Caco-2 (cell line): ENCODE measurements at regions of chr9 and their contacts with region 1.

Region 1: DNA sequence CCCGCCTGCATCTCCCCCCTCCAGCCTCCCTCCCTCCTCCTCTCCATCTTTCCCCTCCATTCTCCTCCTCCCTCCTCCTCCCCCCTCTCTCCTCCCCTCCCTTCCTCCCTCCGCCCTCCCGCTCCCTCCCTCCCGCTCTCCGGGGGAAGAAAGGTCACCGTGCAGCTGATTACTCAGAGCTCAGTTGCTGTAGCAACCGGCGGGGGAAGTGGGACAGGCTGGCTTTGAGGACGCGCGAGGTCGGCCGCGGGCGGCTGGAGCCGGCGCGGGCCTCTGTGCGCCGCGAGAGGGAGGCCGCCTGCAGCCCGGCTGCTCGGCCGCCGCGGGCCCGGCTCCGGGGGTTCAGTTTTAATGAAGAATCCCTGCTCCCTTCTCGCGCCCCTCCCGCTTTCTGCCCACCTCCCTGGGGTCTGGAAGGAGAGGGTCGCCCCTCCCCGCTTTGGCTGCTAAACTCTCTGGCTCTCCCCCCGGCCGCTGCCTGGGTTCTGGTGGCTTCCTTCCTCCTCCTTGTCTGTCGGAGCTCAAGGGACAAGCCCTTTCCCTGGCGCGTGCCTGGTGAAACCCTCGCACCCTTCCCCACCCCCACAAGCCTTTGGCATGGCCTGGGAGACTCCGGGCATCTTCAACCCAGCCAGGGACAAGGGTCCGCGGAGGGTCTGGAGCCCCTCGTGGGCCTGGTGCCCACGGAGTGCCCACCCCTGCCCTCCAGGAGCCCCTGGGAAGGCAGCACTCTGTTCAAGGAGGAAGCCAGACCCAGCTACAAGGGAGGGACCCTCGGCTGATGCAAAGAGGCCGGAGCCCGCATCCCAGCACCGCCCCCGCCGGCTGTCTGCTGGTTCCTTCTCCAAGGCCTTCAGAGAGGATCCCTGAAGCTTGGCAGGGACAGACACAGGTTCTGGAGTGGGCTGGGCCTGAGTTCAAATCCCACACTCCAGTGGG is 160.3 kb downstream of the C9orf50 start:
- DNase-seq: peak; percentile 95 to 98
- H3K4me3 ChIP-seq: peak overlapping the region; percentile 29
- H3K4me3 Mint-ChIP-seq: peak overlapping the region; percentile 82
- H3K27ac Mint-ChIP-seq: peak overlapping the region; percentile 97
- H3K4me1 ChIP-seq: peaks cover 34% of the 10 kb centered on the region
- H3K4me1 Mint-ChIP-seq: no peaks in the 10 kb centered on the region
- H3K27me3 ChIP-seq: no peaks in the 10 kb centered on the region
- H3K27me3 Mint-ChIP-seq: no peaks in the 10 kb centered on the region
- CTCF ChIP-seq: no peak

Region 2: GRCh38 chr9:129143031-129143959 is 317.3 kb before region 1 on chr9:
- CTCF ChIA-PET with region 1: no interaction called
- POLR2A ChIA-PET with region 1: no interaction called
- intact Hi-C with region 1: no loop called
- DNase-seq: peak; percentile 80 to 84
- H3K4me3 ChIP-seq: no peak overlapping the region
- H3K4me3 Mint-ChIP-seq: peak overlapping the region; percentile 42
- H3K27ac Mint-ChIP-seq: peak overlapping the region; percentile 81
- H3K4me1 ChIP-seq: peaks cover 72% of the 10 kb centered on the region
- H3K4me1 Mint-ChIP-seq: peaks cover 43% of the 10 kb centered on the region
- H3K27me3 ChIP-seq: no peaks in the 10 kb centered on the region
- H3K27me3 Mint-ChIP-seq: no peaks in the 10 kb centered on the region
- CTCF ChIP-seq: peak; percentile 78 to 92

Region 3: DNA sequence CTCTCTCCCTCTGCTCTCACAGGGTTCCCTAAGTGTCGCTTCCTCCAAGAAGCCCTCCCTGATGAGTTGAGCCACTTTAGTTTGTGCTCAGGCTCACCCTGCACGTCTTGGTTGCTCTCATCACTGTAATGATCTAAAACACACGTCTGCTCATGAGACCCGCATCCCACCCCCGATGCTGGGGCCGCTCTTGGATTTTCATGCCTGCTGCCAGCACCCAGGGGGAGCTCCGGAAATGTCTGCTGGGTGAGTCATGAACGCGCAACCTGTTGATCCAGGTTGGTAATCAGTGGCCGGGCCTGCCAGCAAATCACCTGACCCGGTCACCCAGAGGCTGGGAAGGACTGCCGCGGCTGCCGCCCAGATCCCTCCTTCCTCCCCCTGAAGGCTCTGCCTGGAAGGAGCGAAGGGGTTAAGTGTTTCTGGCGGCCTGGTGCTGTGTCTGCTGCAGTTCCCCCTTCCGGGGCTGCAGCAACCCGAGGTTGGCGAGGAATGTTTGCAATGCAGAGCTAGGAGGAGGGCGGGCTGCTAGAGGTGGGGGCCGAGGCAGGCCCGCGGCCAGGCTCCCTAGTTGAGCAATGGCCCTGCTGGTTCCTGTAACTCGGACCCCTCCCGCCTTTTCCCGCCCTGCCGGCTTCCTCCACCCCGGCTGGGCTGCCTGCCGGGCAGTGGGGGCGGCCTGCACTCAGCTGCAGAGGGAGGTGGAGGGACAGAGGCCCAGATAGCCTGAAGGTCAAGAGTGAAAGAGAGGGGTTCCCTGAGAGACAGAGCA is 126.5 kb before region 1 on chr9:
- CTCF ChIA-PET with region 1: interaction called, 3 read pairs
- POLR2A ChIA-PET with region 1: interaction called, 11 read pairs
- intact Hi-C with region 1: no loop called
- DNase-seq: peak; percentile 97 to 99
- H3K4me3 ChIP-seq: peak overlapping the region; percentile 11
- H3K4me3 Mint-ChIP-seq: peak overlapping the region; percentile 68
- H3K27ac Mint-ChIP-seq: peak overlapping the region; percentile 98
- H3K4me1 ChIP-seq: peaks cover 27% of the 10 kb centered on the region
- H3K4me1 Mint-ChIP-seq: peaks cover 19% of the 10 kb centered on the region
- H3K27me3 ChIP-seq: no peaks in the 10 kb centered on the region
- H3K27me3 Mint-ChIP-seq: no peaks in the 10 kb centered on the region
- CTCF ChIP-seq: peak; percentile 22 to 31

Region 4: GRCh38 chr9:129442803-129443511 is 17.6 kb before region 1 on chr9:
- CTCF ChIA-PET with region 1: interaction called, 9 read pairs
- POLR2A ChIA-PET with region 1: no interaction called
- intact Hi-C with region 1: loop called (anchors 2 kb)
- DNase-seq: peak; percentile 47 to 61
- H3K4me3 ChIP-seq: no peak overlapping the region
- H3K4me3 Mint-ChIP-seq: peak overlapping the region; percentile 36
- H3K27ac Mint-ChIP-seq: peak overlapping the region; percentile 80
- H3K4me1 ChIP-seq: peaks cover 11% of the 10 kb centered on the region
- H3K4me1 Mint-ChIP-seq: peaks cover 13% of the 10 kb centered on the region
- H3K27me3 ChIP-seq: no peaks in the 10 kb centered on the region
- H3K27me3 Mint-ChIP-seq: no peaks in the 10 kb centered on the region
- CTCF ChIP-seq: no peak

Region 5: DNA sequence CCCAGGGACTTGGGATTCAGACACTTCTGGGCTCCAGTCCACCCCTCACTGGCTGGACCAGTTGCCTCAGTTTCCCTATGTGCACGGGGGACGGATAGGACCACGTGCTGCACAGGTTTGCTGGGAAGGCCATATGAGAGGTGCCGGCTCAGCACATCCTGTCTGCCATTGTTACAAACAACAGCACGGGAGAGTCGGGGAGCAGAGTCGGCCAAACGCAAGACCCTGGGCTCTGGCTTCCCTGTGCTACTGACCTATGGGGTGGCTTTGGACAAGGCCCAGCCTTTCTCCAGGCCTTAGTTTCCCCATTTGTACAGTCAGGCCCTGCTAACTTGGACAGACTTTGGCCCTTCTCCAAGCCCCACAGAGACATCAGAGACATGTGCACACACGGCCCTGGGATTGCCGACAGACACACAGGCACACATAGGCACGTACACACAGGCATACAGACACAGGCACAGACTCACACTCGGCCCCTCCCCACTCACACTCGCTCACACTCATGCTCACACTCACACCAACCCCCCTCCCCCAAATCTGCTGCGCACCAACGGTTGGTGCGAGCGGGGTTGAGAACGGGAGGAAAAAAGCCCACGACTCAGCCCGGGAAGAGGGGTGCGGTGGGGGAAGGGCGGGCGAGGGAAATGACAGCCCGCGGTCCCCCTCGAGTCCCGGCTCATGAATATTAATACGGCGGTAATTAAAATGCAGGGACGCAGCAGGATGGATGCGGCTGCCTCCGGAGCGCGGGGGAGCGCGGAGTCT is 27.2 kb after region 1 on chr9:
- CTCF ChIA-PET with region 1: interaction called, 6 read pairs
- POLR2A ChIA-PET with region 1: interaction called, 32 read pairs
- intact Hi-C with region 1: no loop called
- DNase-seq: peak in 1 of 2 experiments; percentile 41
- H3K4me3 ChIP-seq: peak overlapping the region; percentile 36
- H3K4me3 Mint-ChIP-seq: peak overlapping the region; percentile 78
- H3K27ac Mint-ChIP-seq: peak overlapping the region; percentile 92
- H3K4me1 ChIP-seq: peaks cover 57% of the 10 kb centered on the region
- H3K4me1 Mint-ChIP-seq: peaks cover 52% of the 10 kb centered on the region
- H3K27me3 ChIP-seq: no peaks in the 10 kb centered on the region
- H3K27me3 Mint-ChIP-seq: no peaks in the 10 kb centered on the region
- CTCF ChIP-seq: no peak

Region 6: DNA sequence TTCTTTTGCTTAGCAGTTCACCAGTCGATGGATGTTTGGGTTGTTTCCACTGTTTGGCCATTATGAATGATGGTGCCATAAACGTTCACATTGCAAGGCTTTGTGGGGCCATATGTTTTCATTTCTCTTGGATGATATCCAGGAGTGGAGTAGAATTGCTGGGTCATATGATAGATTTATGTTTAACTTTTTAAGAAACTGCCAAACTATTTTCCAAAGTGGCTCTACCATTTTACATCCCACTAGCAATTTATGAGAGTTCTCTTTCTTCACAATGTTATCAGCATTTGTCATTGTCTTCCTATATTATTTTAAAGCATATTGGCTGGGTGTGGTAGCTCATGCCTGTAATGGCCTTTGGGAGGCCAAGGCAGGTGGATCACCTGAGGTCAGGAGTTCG is 598.3 kb after region 1 on chr9:
- CTCF ChIA-PET with region 1: no interaction called
- POLR2A ChIA-PET with region 1: no interaction called
- intact Hi-C with region 1: no loop called
- DNase-seq: no peak
- H3K4me3 ChIP-seq: no peak overlapping the region
- H3K4me3 Mint-ChIP-seq: no peak overlapping the region
- H3K27ac Mint-ChIP-seq: no peak overlapping the region
- H3K4me1 ChIP-seq: no peaks in the 10 kb centered on the region
- H3K4me1 Mint-ChIP-seq: no peaks in the 10 kb centered on the region
- H3K27me3 ChIP-seq: no peaks in the 10 kb centered on the region
- H3K27me3 Mint-ChIP-seq: no peaks in the 10 kb centered on the region
- CTCF ChIP-seq: no peak